MCF 10A (cell line): ENCODE measurements at regions of chr18 and their contacts with region 1.

Region 1: GRCh38 chr18:62759704-62760402 is 44.5 kb downstream of the PHLPP1 start:
- DNase-seq: peak; percentile 80
- H3K4me3 Mint-ChIP-seq: peak overlapping the region; percentile 63
- H3K27ac Mint-ChIP-seq: peak overlapping the region; percentile 92
- H3K4me1 Mint-ChIP-seq: peaks cover 58% of the 10 kb centered on the region
- H3K27me3 Mint-ChIP-seq: no peaks in the 10 kb centered on the region
- CTCF ChIP-seq: no peak

Region 2: DNA sequence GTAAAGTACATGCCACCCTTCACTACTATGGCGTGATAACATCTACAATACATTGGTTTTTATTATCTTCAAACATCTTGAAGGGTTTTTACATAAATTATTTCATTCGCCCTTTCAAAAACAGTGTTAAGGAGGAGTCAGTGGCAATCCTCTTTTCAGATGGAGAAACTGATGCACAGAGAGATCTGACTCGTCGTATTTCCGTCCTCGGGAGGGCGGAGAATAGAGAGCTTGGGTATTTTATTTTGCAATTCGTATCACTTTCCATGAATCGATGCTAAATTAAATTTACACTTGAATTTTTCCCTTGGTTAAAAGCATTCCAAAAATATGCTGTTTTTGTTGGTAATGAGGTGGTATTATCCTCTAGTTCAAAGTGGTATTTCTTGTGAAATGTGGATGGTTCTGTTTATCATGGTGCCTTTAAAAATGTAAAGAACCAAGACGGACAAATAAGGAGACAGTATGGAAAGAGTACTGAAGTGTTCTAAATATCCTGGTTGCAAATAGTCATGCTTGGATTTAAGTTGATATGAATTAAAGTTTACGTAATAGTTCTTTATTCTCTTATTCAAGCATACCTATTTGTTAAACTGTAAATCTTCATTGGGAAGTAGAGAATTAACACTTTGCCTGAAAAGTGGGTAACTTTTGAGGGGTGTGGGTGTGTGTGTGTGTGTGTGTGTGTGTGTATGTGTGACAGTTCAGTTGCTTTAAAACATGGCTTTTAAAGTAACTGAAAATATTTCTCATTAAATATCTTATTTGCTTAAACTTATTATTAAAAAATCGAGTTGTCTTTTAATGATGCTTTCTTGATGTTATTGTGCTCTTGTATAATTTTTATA is 38.9 kb before region 1 on chr18:
- CTCF ChIA-PET with region 1: interaction called, 11 read pairs
- POLR2A ChIA-PET with region 1: interaction called, 316 read pairs
- intact Hi-C with region 1: loop called (anchors 2 kb)
- DNase-seq: no peak
- H3K4me3 Mint-ChIP-seq: no peak overlapping the region
- H3K27ac Mint-ChIP-seq: no peak overlapping the region
- H3K4me1 Mint-ChIP-seq: peaks cover 35% of the 10 kb centered on the region
- H3K27me3 Mint-ChIP-seq: no peaks in the 10 kb centered on the region
- CTCF ChIP-seq: no peak